Natural killer cell (primary cell): ENCODE measurements at regions of chr7 and their contacts with region 1.

Region 1: DNA sequence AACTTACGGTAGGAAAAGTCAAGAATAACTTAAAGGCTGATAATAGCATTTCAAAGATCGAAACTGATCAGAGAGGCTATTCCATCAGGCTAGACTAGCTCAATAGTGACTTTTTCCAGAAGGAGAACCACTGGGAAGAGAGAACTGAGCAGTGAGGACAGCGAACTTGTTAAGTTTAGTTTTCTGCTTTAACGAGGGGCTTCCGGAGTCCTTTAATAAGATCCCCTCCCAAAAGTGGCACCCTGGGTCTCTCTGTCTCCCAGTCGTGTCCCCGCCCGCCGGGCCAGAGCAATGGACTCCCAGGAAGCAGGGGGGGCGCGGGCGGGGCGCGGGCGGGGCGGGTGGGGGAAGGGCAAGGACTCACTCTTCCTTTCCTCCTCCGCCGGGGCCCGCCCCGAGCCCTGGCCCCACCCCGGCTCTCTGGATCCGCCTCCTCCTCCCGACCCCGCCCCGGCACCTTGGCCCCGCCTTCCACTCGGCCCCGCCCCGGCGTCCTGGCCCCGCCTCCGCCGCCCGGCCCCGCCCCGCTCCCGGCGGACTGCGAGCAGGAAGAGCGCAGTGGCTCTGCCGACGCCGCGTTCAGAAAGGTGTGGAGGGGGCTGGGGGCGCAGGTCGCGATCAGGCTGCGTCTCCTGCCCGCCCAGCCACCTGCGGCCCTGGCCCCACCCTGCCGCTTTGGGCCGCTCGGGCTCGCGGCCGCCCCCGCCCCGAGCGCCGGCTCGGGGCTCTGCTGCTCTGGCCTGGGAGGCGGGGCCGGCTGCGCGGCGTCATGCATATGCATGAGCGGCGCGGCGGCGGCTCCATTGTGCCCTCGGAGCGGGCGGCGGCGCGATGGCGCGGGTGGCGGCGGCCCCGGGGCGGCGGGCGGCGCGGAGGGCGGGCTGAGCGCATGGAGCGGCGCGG is at the start of gene ZMIZ2:
- DNase-seq: peak; percentile 93 to 94
- ATAC-seq: peak; percentile 89 to 97 (median 93)
- H3K4me3 ChIP-seq: peak within 1 kb of the TSS; percentile 78
- H3K4me3 Mint-ChIP-seq: peak within 1 kb of the TSS; percentile 94
- H3K27ac ChIP-seq: peak within 1 kb of the TSS; percentile 77
- H3K27ac Mint-ChIP-seq: peak within 1 kb of the TSS; percentile 85 to 96
- H3K4me1 ChIP-seq: peaks cover 31% of the 10 kb centered on the region
- H3K4me1 Mint-ChIP-seq: peaks cover 37 to 48% of the 10 kb centered on the region in 2 donors
- H3K27me3 ChIP-seq: no peaks in the 10 kb centered on the region
- H3K27me3 Mint-ChIP-seq: no peaks in the 10 kb centered on the region
- CTCF ChIP-seq: no peak
- total RNA-seq, gene ZMIZ2: 152 to 170 (median 167) TPM

Region 2: GRCh38 chr7:44638611-44639557 is 109.4 kb before region 1 on chr7:
- intact Hi-C with region 1: loop called (anchors 10 kb)
- DNase-seq: peak; percentile 72 to 87
- ATAC-seq: peak; percentile 79 to 91 (median 85)
- H3K4me3 ChIP-seq: no peak overlapping the region
- H3K4me3 Mint-ChIP-seq: peak overlapping the region; percentile 90
- H3K27ac ChIP-seq: peak overlapping the region; percentile 97
- H3K27ac Mint-ChIP-seq: peak overlapping the region; percentile 94 to 96
- H3K4me1 ChIP-seq: peaks cover 68% of the 10 kb centered on the region
- H3K4me1 Mint-ChIP-seq: peaks cover 65% of the 10 kb centered on the region in 2 donors
- H3K27me3 ChIP-seq: no peaks in the 10 kb centered on the region
- H3K27me3 Mint-ChIP-seq: no peaks in the 10 kb centered on the region
- CTCF ChIP-seq: no peak